Heart right ventricle (tissue), 16 donors: ENCODE measurements at regions of chr7 and their contacts with region 1.

Region 1: GRCh38 chr7:41731492-41732435 is 28.9 kb upstream of the INHBA start:
- DNase-seq: no peak
- ATAC-seq: no peak
- H3K4me3 ChIP-seq: no peak overlapping the region
- H3K27ac ChIP-seq: no peak overlapping the region
- H3K4me1 ChIP-seq: peaks cover 0 to 15% (median 0%) of the 10 kb centered on the region in 9 donors
- H3K27me3 ChIP-seq: peaks cover 0 to 2% (median 0%) of the 10 kb centered on the region in 7 donors
- CTCF ChIP-seq: peak in 7 of 9 donors; percentile 11 to 62 (median 46)

Region 2: GRCh38 chr7:40232242-40232893 is 1499.4 kb before region 1 on chr7:
- intact Hi-C with region 1: loop called in 2 of 10 experiments (anchors 5 kb)
- DNase-seq: peak in 1 of 2 donors; percentile 30
- ATAC-seq: no peak
- H3K4me3 ChIP-seq: no peak overlapping the region
- H3K27ac ChIP-seq: no peak overlapping the region
- H3K4me1 ChIP-seq: peaks cover 0 to 10% (median 0%) of the 10 kb centered on the region in 9 donors
- H3K27me3 ChIP-seq: no peaks in the 10 kb centered on the region
- CTCF ChIP-seq: peak in 8 of 9 donors; percentile 42 to 65 (median 58)

Region 3: DNA sequence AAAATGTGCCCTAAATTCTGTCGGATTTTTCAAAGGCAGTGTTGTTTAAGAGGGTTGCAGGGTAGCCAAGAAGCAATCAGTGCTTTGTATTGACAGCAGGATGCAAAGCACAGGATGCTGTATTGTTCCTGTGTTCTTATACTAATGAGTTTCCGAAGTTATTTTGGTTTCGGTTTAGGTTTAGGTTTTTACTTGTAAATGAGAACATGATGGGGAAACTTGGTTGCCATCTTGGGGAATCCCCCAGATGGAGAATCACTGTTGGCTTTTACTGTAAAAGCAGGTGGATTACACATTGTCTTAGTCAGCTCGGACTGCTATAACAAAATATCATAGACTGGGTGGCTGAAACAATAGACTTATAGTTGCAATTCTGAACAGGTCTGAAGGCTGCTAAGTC is 101.0 kb before region 1 on chr7:
- intact Hi-C with region 1: no loop called
- DNase-seq: no peak
- ATAC-seq: no peak
- H3K4me3 ChIP-seq: no peak overlapping the region
- H3K27ac ChIP-seq: no peak overlapping the region
- H3K4me1 ChIP-seq: peaks cover 0 to 24% (median 0%) of the 10 kb centered on the region in 9 donors
- H3K27me3 ChIP-seq: no peaks in the 10 kb centered on the region
- CTCF ChIP-seq: no peak